ENCODE measurements at regions of chr15 and their contacts with region 1.

Region 1: DNA sequence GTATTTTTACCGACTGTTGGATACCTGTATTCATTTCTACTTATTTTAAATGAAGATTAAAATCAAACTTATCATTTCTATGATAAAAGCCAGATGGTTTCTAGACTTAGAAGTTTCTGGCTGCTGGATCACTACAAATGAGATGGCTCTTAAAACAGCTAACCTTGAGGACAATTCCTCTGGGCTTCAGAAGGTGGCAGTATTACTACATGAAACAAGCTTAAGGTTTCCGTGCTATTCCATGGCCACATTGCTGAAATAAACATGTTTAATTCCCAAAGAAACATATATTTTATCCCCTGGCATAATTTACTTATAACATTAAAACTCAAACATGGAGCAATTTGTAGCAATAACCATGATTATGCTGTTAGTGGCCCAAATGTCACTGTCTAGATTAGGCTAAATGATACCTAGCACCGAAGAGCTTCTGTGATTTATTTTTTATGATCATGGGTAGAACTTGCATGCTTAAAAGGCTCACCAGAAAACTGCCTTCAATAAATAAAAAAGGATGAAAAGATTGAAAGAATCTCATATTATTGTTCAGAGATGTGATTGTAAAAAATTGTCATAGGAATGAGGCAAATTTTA is 204.0 kb upstream of the NANOGP8 start:
- DNase-seq: peak; percentile 55
- ATAC-seq: peak; percentile 52
- H3K4me3 ChIP-seq: no peak overlapping the region
- H3K27ac ChIP-seq: no peak overlapping the region
- H3K4me1 ChIP-seq: peaks cover 15 to 17% of the 10 kb centered on the region in 2 experiments
- H3K27me3 ChIP-seq: no peaks in the 10 kb centered on the region
- CTCF ChIP-seq: peak; percentile 51 to 91 (median 76); a peak in 5 of 6 replicates
- POLR2A ChIP-seq: no peak
- RAD21 ChIP-seq: peak; percentile 76

Region 2: GRCh38 chr15:35078221-35078915 is 210.8 kb before region 1 on chr15:
- CTCF ChIA-PET with region 1: interaction called, 7 read pairs
- POLR2A ChIA-PET with region 1: no interaction called
- RAD21 ChIA-PET with region 1: no interaction called
- intact Hi-C with region 1: loop called (anchors 10 kb)
- DNase-seq: peak; percentile 44
- ATAC-seq: peak; percentile 86
- H3K4me3 ChIP-seq: no peak overlapping the region
- H3K27ac ChIP-seq: no peak overlapping the region
- H3K4me1 ChIP-seq: no peaks in the 10 kb centered on the region
- H3K27me3 ChIP-seq: no peaks in the 10 kb centered on the region
- CTCF ChIP-seq: peak; percentile 45 to 83 (median 67); a peak in 5 of 6 replicates
- POLR2A ChIP-seq: no peak
- RAD21 ChIP-seq: peak; percentile 87

Region 3: DNA sequence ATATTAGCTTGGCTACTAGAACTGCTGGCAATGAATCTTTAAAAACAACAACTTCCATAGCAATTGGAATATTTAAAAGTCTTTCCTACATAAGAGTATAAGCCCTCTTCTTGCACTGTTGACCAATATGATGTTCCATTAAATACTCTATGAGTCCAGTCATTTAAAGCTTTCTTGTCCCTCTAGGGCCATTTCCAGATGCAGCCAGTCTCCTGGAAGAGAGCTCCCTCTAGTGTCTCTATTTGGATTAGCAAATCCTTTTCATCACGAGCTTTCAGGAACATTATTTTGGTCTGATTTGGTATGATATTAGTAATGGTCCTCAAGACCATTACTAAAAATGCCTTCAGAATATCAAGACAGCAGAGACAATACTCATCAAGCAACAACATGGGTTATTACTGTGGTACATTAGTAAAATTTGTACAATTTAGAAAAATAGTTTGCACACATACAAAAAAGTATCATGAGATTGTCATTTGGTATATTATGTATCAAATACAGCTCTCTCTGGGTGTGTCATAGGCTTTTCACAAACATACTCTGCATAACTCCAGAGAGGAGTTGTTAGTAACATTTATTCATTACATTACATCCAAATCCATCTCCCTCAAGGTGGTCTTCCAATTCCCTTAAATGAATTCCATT is 155.6 kb after region 1 on chr15:
- CTCF ChIA-PET with region 1: interaction called, 173 read pairs
- POLR2A ChIA-PET with region 1: interaction called, 6 read pairs
- RAD21 ChIA-PET with region 1: interaction called, 16 to 21 read pairs
- intact Hi-C with region 1: loop called (anchors 1 kb)
- DNase-seq: peak; percentile 39
- ATAC-seq: peak; percentile 65
- H3K4me3 ChIP-seq: no peak overlapping the region
- H3K27ac ChIP-seq: no peak overlapping the region
- H3K4me1 ChIP-seq: no peaks in the 10 kb centered on the region
- H3K27me3 ChIP-seq: no peaks in the 10 kb centered on the region
- CTCF ChIP-seq: peak; percentile 55 to 87 (median 76); a peak in 5 of 6 replicates
- POLR2A ChIP-seq: no peak
- RAD21 ChIP-seq: peak; percentile 80

Region 4: DNA sequence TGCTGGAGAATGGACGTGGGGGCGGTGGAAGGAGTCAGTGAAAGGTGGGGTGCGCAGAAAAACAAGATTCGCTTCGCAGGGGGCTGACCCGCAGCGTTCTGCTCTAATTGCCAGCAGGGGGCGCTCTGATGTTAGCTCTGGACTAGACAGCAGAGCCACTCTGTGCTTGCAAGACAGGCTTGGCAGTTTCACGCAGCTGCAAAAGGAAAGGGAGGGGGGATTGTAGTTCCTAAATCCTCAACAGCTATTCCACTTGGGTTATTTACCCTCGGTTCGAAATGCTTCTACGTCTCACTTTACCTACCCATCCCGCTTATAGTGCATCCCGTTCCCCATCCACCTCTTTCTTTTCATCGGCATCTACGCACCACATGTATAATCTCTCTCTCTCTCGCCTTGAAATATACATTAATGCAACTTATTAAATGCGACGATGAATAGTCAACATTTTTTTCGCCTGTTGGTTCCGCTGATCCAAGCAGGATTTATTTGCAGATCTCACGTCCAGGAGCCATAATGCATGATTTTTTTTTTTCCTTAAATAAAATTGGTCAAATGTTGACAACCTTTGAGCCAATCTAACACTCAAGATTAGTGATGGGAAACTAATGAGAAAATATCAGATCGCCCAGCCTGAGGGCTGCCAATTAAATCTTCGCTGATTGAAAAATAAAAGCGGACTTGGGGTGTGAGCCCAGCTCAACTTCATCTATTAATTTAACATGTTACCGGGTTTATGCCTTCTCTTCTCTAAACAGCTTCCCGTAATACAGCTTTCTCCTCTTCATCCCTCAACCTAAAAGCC is 1594.8 kb after region 1 on chr15:
- CTCF ChIA-PET with region 1: no interaction called
- POLR2A ChIA-PET with region 1: no interaction called
- RAD21 ChIA-PET with region 1: no interaction called
- intact Hi-C with region 1: loop called (anchors 10 kb)
- DNase-seq: peak; percentile 63
- ATAC-seq: peak; percentile 99
- H3K4me3 ChIP-seq: no peak overlapping the region
- H3K27ac ChIP-seq: no peak overlapping the region
- H3K4me1 ChIP-seq: no peaks in the 10 kb centered on the region
- H3K27me3 ChIP-seq: no peaks in the 10 kb centered on the region
- CTCF ChIP-seq: peak; percentile 57 to 85 (median 85); a peak in 5 of 6 replicates
- POLR2A ChIP-seq: no peak
- RAD21 ChIP-seq: peak; percentile 82

Region 5: GRCh38 chr15:37125143-37125542 is 1836.0 kb after region 1 on chr15:
- CTCF ChIA-PET with region 1: no interaction called
- POLR2A ChIA-PET with region 1: no interaction called
- RAD21 ChIA-PET with region 1: no interaction called
- intact Hi-C with region 1: loop called (anchors 10 kb)
- DNase-seq: no peak
- ATAC-seq: no peak
- H3K4me3 ChIP-seq: no peak overlapping the region
- H3K27ac ChIP-seq: no peak overlapping the region
- H3K4me1 ChIP-seq: no peaks in the 10 kb centered on the region
- H3K27me3 ChIP-seq: no peaks in the 10 kb centered on the region
- CTCF ChIP-seq: no peak
- POLR2A ChIP-seq: no peak
- RAD21 ChIP-seq: no peak

Measured in HCT116 (cell line).